Gastrocnemius medialis (tissue), 4 donors: ENCODE measurements at regions of chr6 and their contacts with region 1.

Region 1: GRCh38 chr6:14210663-14211561 is 93.3 kb downstream of the CD83 start:
- DNase-seq: peak; percentile 87 to 92
- ATAC-seq: peak; percentile 92 to 94
- H3K4me3 ChIP-seq: peak overlapping the region; percentile 75 to 93 (median 82)
- H3K27ac ChIP-seq: peak overlapping the region; percentile 86 to 89 (median 87)
- H3K4me1 ChIP-seq: peaks cover 12% of the 10 kb centered on the region in 2 donors
- H3K27me3 ChIP-seq: no peaks in the 10 kb centered on the region
- CTCF ChIP-seq: peak; percentile 48 to 99 (median 98)
- POLR2A ChIP-seq: peak; percentile 63 to 78

Region 2: GRCh38 chr6:14396826-14397517 is 186.1 kb after region 1 on chr6:
- in situ Hi-C with region 1: no loop called
- intact Hi-C with region 1: loop called (anchors 5 kb)
- DNase-seq: peak in 1 of 2 donors; percentile 15
- ATAC-seq: peak in 1 of 2 donors; percentile 62
- H3K4me3 ChIP-seq: no peak overlapping the region
- H3K27ac ChIP-seq: no peak overlapping the region
- H3K4me1 ChIP-seq: peaks cover 6 to 20% of the 10 kb centered on the region in 2 donors
- H3K27me3 ChIP-seq: peaks cover 0 to 9% (median 9%) of the 10 kb centered on the region in 3 donors
- CTCF ChIP-seq: peak in 2 of 5 experiments; percentile 20 to 33
- POLR2A ChIP-seq: no peak

Region 3: DNA sequence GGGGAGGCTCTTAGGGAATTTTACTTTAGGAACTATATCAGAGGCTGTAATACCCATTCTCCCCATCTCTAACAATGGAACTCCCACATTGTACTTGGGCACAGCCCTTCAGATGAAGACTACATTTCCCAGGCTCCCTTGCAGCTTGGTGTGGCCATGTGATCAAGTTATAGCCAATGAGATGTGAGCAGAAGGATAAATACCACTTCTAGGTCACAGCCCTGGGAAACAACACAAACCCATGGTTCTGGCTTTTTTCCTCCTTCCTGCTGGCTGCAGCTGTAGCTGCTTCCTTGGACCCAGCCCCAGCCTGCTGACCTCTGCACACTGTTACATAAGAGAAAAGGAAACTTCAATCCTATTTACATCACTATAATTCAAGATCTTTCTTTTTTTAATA is 589.0 kb after region 1 on chr6:
- in situ Hi-C with region 1: no loop called
- intact Hi-C with region 1: loop called (anchors 10 kb)
- DNase-seq: peak; percentile 49 to 59
- ATAC-seq: peak; percentile 90 to 95
- H3K4me3 ChIP-seq: no peak overlapping the region
- H3K27ac ChIP-seq: peak overlapping the region in 2 of 4 donors; percentile 1 to 11
- H3K4me1 ChIP-seq: peaks cover 0 to 12% of the 10 kb centered on the region in 2 donors
- H3K27me3 ChIP-seq: no peaks in the 10 kb centered on the region
- CTCF ChIP-seq: no peak
- POLR2A ChIP-seq: no peak

Region 4: GRCh38 chr6:15389765-15390723 is 1179.1 kb after region 1 on chr6:
- in situ Hi-C with region 1: loop called in 1 of 4 experiments (anchors 25 kb)
- intact Hi-C with region 1: no loop called
- DNase-seq: no peak
- ATAC-seq: peak; percentile 28 to 41
- H3K4me3 ChIP-seq: no peak overlapping the region
- H3K27ac ChIP-seq: peak overlapping the region; percentile 66 to 75 (median 74)
- H3K4me1 ChIP-seq: peaks cover 44 to 74% of the 10 kb centered on the region in 2 donors
- H3K27me3 ChIP-seq: no peaks in the 10 kb centered on the region
- CTCF ChIP-seq: peak; percentile 32 to 65 (median 43)
- POLR2A ChIP-seq: no peak

Region 5: DNA sequence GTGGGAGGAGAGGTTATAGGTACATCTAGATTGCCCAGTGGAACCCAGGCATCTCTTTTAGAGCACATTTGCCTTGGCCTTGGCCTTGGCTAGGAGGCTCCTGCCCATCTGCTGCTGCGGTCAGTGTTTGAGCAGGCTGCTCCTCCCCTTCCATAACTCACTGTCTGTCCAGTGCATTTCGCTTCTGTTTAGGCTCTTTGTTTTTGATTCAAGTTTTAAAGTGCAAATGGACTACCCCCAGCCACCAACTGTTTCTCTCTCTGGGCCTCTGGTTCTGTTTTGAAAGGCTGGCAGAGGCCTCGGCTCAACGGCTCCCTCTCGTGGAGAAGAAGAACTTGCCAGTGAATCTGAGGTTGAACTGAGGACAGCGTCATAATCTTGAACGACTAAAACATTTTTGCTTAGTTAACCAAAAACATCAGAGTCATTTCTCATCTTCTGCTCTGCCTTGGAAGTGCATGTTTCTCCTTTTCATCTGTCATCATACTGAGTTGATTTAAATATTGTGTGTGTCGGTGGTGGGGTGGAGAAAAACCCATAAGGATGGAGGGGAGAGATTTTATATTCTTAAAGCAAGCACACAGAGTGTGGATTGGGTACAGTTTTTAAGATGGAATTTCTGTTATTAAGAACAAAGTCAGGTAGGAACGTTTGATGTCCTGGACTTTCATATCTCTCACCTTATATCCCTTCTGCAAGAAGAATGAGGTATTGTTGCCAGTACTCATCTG is 1280.5 kb after region 1 on chr6:
- in situ Hi-C with region 1: loop called in 2 of 4 experiments (anchors 25 kb)
- intact Hi-C with region 1: loop called (anchors 5 kb)
- DNase-seq: peak; percentile 59 to 77
- ATAC-seq: peak; percentile 42 to 56
- H3K4me3 ChIP-seq: no peak overlapping the region
- H3K27ac ChIP-seq: peak overlapping the region; percentile 55 to 73 (median 69)
- H3K4me1 ChIP-seq: peaks cover 38 to 45% of the 10 kb centered on the region in 2 donors
- H3K27me3 ChIP-seq: no peaks in the 10 kb centered on the region
- CTCF ChIP-seq: peak; percentile 86 to 94 (median 93)
- POLR2A ChIP-seq: no peak

Region 6: GRCh38 chr6:15628499-15629131 is 1417.7 kb after region 1 on chr6:
- in situ Hi-C with region 1: loop called (anchors 10 to 25 kb)
- intact Hi-C with region 1: loop called (anchors 2 kb)
- DNase-seq: no peak
- ATAC-seq: no peak
- H3K4me3 ChIP-seq: no peak overlapping the region
- H3K27ac ChIP-seq: no peak overlapping the region
- H3K4me1 ChIP-seq: peaks cover 0 to 3% of the 10 kb centered on the region in 2 donors
- H3K27me3 ChIP-seq: no peaks in the 10 kb centered on the region
- CTCF ChIP-seq: no peak
- POLR2A ChIP-seq: no peak